ENCODE measurements at regions of chr2 and their contacts with region 1.

Region 1: DNA sequence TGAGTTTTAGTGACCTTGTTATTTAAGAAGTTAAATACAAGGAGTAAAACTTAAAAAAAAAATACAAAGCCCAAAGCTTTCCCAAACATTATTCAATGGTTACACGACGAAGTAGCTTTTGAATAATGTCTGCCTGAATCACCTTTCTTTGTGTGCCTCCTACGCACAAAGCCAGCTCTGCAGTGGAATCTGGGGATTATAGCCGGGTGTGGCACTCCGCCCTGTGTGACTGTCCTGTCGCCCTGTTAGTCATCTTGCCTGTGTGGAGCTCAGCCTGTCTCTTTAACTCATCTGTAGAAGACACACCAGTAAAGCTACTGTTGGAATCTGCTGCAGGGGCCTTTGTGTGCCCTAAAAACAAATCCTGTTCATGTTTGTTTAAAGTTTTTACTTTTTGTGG is 79.4 kb upstream of the TCF7L1 start:
- DNase-seq: peak; percentile 66
- H3K4me3 Mint-ChIP-seq: peak overlapping the region; percentile 6
- H3K27ac Mint-ChIP-seq: peak overlapping the region; percentile 68
- H3K4me1 Mint-ChIP-seq: peaks cover 25% of the 10 kb centered on the region
- H3K27me3 Mint-ChIP-seq: no peaks in the 10 kb centered on the region
- CTCF ChIP-seq: no peak

Region 2: DNA sequence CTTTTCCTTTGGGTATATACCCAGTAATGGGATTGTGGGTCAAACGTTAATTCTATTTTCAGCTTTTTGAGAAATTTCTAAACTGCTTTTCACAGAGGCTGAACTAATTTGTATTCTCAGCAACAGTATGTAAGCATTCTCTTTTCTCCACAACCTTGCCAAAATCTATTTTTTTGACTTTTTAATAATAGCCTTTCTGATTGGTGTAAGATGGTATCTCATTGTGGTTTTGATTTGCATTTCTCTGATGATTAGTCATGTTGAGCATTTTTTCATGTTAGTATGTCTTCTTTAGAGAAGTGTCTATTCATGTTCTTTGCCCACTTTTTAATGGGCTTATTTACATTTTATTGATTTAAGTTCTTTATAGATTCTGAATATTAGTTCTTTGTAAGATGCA is 318.4 kb before region 1 on chr2:
- CTCF ChIA-PET with region 1: no interaction called
- POLR2A ChIA-PET with region 1: no interaction called
- intact Hi-C with region 1: no loop called
- DNase-seq: no peak
- H3K4me3 Mint-ChIP-seq: no peak overlapping the region
- H3K27ac Mint-ChIP-seq: no peak overlapping the region
- H3K4me1 Mint-ChIP-seq: no peaks in the 10 kb centered on the region
- H3K27me3 Mint-ChIP-seq: no peaks in the 10 kb centered on the region
- CTCF ChIP-seq: no peak

Region 3: DNA sequence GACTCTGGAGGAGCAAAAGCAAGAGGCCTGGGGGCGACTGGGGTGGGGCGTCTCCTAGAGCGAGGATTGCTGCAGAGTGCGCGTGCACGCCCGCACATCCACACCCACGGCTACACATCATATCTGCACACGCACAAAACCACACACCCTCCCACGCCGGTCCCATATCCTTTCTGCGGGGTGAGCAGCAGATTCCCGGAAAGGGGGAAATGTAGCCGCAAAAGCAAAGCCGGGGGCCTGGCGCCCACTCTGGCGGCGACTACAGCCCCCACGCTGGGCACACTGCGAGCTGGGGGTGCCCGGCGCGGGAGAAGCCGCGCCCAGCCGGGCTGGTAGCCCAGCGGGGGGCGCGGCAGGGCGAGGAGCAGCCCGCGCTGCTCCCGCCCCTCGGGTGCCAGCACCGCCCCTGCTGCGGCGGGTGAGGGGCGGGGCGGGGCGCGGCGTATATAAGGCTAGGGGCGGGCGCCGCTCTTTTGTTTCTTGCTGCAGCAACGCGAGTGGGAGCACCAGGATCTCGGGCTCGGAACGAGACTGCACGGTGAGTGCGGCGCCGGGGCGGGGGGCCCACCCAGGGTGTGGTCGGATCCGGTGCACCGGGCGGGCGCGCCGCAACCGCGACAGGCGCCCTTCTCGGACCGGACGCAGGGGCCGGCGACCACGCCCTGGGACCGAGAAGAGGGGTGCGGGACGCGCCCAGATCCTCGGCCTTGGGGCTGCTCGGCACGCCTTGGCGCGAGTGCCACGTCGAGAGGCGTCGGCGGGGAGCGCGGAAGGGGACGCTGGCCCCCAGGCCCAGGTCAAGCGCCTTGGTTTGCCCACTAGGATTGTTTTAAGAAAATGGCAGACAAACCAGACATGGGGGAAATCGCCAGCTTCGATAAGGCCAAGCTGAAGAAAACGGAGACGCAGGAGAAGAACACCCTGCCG is 148.4 kb before region 1 on chr2 and contains the start of gene TMSB10:
- CTCF ChIA-PET with region 1: no interaction called
- POLR2A ChIA-PET with region 1: no interaction called
- intact Hi-C with region 1: no loop called
- DNase-seq: peak; percentile 87
- H3K4me3 Mint-ChIP-seq: peak within 1 kb of the TSS; percentile 85
- H3K27ac Mint-ChIP-seq: peak within 1 kb of the TSS; percentile 83
- H3K4me1 Mint-ChIP-seq: peaks cover 29% of the 10 kb centered on the region
- H3K27me3 Mint-ChIP-seq: no peaks in the 10 kb centered on the region
- CTCF ChIP-seq: peak; percentile 10
- total RNA-seq, gene TMSB10: 3,313 and 3,349 TPM in 2 replicates

Region 4: DNA sequence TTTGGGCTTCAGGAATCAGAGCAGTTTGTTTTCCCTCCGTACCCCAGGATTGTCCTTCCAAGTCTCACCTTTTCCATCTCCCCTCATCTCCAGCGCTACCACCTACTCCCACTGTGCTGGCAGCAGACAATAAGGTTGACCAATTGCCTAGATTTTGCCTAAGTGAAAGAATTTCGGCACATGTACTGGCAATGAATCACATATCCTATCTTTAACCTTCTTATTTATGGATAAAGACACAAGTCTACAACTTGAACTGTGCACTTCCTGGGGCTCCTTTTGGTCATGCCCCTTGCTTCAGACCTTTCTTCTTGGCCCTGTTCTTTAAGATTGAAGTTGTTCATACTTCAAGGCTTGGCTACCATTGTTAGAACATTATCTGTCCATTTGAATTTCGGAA is 11.5 kb before region 1 on chr2:
- CTCF ChIA-PET with region 1: interaction called, 5 read pairs
- POLR2A ChIA-PET with region 1: interaction called, 10 read pairs
- intact Hi-C with region 1: no loop called
- DNase-seq: no peak
- H3K4me3 Mint-ChIP-seq: no peak overlapping the region
- H3K27ac Mint-ChIP-seq: peak overlapping the region; percentile 29
- H3K4me1 Mint-ChIP-seq: peaks cover 12% of the 10 kb centered on the region
- H3K27me3 Mint-ChIP-seq: no peaks in the 10 kb centered on the region
- CTCF ChIP-seq: no peak